Heart right ventricle (tissue), 16 donors: ENCODE measurements at regions of chr22 and their contacts with region 1.

Region 1: DNA sequence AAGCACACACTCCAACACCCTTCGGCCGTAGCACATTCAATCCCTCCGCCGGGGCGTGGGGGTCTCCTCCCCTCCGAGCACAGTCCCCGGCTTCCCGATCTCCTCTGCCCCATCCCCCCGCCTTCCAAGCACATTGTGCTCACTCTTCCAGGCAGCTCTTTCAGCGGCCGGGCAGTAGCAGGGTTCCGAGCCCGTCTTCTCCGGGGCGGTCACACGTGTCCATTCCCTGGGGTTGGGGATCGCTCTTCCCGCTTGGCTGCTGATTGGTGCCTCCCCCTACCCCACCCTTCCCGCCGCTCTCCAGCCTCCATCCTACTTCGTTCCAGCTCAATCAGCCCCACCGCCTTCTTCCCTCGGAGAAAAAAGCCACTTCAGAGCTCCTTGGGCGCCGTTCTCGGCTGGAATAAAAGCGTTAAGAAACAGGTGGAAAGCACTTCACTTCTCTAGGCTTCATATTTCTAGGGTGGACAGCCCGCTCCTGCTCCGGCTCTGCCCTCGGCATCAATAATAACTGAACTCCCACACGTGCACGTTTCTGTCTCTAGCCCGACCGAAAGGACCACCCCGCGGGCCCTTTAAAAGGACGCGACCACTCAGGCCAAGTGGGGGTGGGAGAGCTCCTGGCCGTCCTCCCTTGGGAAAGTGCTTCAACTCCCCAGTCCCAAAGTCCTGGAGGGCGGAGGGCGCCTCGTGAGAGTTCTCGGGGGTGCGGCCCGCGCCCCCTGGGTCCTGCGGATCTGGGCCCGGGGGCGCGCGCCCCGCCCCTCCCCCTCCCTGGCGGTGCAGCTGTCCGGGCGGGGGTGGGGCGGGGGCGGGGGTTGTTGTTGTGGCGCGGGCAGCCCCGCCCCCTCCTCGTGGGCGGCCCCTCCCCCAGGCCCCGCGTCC is 464 bp upstream of the CECR2 start:
- DNase-seq: peak; percentile 60 to 63
- ATAC-seq: peak; percentile 70 to 85 (median 76)
- H3K4me3 ChIP-seq: peak overlapping the region; percentile 41 to 88 (median 74)
- H3K27ac ChIP-seq: peak overlapping the region; percentile 64 to 90 (median 84)
- H3K4me1 ChIP-seq: peaks cover 0 to 29% (median 19%) of the 10 kb centered on the region in 9 donors
- H3K27me3 ChIP-seq: peaks cover 0 to 86% (median 3%) of the 10 kb centered on the region in 7 donors
- CTCF ChIP-seq: no peak

Region 2: DNA sequence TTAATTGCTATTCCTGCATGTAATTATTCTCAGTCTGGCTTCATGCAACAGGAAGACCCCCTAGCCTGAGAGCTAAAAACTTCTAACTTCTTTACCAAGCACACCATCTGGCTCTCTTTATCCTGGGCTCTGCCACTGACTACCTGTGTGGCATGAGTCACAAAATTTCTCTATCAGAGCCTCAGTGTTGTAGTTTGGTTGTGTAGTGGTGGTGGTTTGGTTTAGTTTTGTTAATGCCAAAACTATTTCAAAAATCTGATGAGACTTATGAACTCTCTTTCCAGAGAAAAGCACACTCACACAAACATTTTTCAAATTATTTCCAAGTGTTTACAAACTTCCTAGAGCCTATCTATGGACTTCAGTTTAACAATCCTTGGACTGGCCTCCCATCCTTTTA is 291.5 kb before region 1 on chr22:
- intact Hi-C with region 1: loop called in 2 of 10 experiments (anchors 5 to 10 kb)
- DNase-seq: no peak
- ATAC-seq: no peak
- H3K4me3 ChIP-seq: no peak overlapping the region
- H3K27ac ChIP-seq: no peak overlapping the region
- H3K4me1 ChIP-seq: peaks cover 0 to 18% (median 0%) of the 10 kb centered on the region in 9 donors
- H3K27me3 ChIP-seq: peaks cover 0 to 3% (median 0%) of the 10 kb centered on the region in 7 donors
- CTCF ChIP-seq: no peak

Region 3: DNA sequence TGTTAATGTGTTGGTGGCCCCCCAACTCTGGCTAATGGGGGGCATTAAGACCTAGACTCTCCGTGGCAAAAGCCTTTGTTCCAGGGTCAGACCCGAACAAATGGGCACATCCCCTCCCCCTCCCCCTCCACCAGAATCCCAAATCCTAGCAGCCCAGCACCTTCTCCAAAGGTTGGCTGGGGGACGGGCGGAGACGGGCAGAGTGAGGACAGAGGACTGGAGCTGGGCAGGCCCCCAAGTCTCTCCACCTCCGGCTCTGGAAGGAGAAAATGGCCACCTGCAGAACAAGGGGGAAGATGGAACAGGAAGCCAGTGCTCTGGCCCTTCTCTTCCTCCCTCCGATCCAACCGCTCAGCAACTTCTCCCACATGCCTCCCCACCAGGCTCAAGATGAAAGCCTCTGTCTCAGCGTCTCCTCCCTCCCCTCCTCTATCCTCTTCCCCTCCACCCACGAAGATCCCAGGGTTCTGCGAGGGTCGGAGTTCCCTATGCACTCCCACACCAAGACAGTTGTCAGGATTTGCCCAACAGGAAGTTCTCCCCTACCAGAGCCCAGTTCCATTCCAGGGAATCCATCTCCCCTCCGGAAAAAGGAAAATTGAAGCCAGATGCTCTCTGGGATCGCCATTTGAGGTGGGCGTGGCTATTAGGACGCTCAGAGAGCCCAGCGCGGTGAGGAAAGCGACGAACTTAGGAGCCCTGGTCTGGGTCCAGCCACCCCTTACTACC is 169.6 kb before region 1 on chr22:
- intact Hi-C with region 1: loop called in 2 of 10 experiments (anchors 10 kb)
- DNase-seq: peak in 1 of 2 donors; percentile 80
- ATAC-seq: peak; percentile 70 to 87 (median 78)
- H3K4me3 ChIP-seq: peak overlapping the region; percentile 24 to 63 (median 50)
- H3K27ac ChIP-seq: peak overlapping the region; percentile 77 to 97 (median 88)
- H3K4me1 ChIP-seq: peaks cover 0 to 25% (median 15%) of the 10 kb centered on the region in 9 donors
- H3K27me3 ChIP-seq: peaks cover 0 to 5% (median 0%) of the 10 kb centered on the region in 7 donors
- CTCF ChIP-seq: no peak

Region 4: GRCh38 chr22:17407643-17408042 is 38.8 kb after region 1 on chr22:
- intact Hi-C with region 1: loop called in 1 of 10 experiments (anchors 5 kb)
- DNase-seq: no peak
- ATAC-seq: peak in 5 of 8 donors; percentile 35 to 92 (median 48)
- H3K4me3 ChIP-seq: no peak overlapping the region
- H3K27ac ChIP-seq: peak overlapping the region in 1 of 10 donors; percentile 73
- H3K4me1 ChIP-seq: peaks cover 0 to 40% (median 30%) of the 10 kb centered on the region in 9 donors
- H3K27me3 ChIP-seq: no peaks in the 10 kb centered on the region
- CTCF ChIP-seq: no peak

Region 5: GRCh38 chr22:17477391-17477833 is 108.6 kb after region 1 on chr22:
- intact Hi-C with region 1: loop called in 5 of 10 experiments (anchors 5 to 10 kb)
- DNase-seq: peak; percentile 23 to 29
- ATAC-seq: peak; percentile 56 to 95 (median 86)
- H3K4me3 ChIP-seq: peak overlapping the region in 9 of 10 donors; percentile 7 to 48 (median 38)
- H3K27ac ChIP-seq: peak overlapping the region in 7 of 10 donors; percentile 12 to 56 (median 42)
- H3K4me1 ChIP-seq: peaks cover 0 to 33% (median 13%) of the 10 kb centered on the region in 9 donors
- H3K27me3 ChIP-seq: no peaks in the 10 kb centered on the region
- CTCF ChIP-seq: no peak

Region 6: GRCh38 chr22:17483688-17484381 is 115.0 kb after region 1 on chr22:
- intact Hi-C with region 1: loop called in 5 of 10 experiments (anchors 5 to 10 kb)
- DNase-seq: no peak
- ATAC-seq: peak; percentile 38 to 92 (median 82)
- H3K4me3 ChIP-seq: no peak overlapping the region
- H3K27ac ChIP-seq: peak overlapping the region in 7 of 10 donors; percentile 3 to 71 (median 28)
- H3K4me1 ChIP-seq: peaks cover 0 to 13% (median 0%) of the 10 kb centered on the region in 9 donors
- H3K27me3 ChIP-seq: no peaks in the 10 kb centered on the region
- CTCF ChIP-seq: no peak

Region 7: DNA sequence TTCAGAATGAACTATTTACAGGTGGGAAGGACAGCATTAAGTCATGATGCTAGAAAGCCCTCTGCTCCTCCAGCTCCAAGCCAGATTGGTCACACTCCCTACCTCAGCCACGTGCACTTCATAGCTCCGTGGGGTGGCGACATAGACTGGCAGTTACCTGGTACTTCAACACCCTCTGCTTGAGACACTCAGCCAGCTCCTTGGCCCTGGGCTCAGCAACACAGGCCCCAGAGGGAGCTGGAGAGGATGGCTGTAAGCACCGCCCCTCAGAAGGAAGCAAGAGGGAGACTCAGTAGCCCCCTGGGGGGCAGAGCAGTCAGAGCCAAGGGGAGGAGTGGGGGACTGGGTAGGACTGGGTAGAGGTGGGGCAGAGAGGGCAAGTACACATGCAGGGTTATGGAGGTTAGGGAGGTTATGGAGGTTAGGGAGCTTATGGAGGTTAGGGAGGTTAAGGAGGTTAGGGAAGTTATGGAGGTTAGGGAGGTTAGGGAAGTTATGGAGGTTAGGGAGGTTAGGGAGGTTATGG is 507.6 kb after region 1 on chr22:
- intact Hi-C with region 1: no loop called
- DNase-seq: no peak
- ATAC-seq: no peak
- H3K4me3 ChIP-seq: no peak overlapping the region
- H3K27ac ChIP-seq: peak overlapping the region in 1 of 10 donors; percentile 55
- H3K4me1 ChIP-seq: peaks cover 0 to 13% (median 5%) of the 10 kb centered on the region in 9 donors
- H3K27me3 ChIP-seq: no peaks in the 10 kb centered on the region
- CTCF ChIP-seq: no peak